Activated naive CD4-positive, alpha-beta T cell treated with anti-CD3 and anti-CD28 coated beads, Interleukin-2, amount 10 ng/mL, durations not matched to agents 7 days and 5 days (primary cell): ENCODE measurements at regions of chr14 and their contacts with region 1.

Region 1: DNA sequence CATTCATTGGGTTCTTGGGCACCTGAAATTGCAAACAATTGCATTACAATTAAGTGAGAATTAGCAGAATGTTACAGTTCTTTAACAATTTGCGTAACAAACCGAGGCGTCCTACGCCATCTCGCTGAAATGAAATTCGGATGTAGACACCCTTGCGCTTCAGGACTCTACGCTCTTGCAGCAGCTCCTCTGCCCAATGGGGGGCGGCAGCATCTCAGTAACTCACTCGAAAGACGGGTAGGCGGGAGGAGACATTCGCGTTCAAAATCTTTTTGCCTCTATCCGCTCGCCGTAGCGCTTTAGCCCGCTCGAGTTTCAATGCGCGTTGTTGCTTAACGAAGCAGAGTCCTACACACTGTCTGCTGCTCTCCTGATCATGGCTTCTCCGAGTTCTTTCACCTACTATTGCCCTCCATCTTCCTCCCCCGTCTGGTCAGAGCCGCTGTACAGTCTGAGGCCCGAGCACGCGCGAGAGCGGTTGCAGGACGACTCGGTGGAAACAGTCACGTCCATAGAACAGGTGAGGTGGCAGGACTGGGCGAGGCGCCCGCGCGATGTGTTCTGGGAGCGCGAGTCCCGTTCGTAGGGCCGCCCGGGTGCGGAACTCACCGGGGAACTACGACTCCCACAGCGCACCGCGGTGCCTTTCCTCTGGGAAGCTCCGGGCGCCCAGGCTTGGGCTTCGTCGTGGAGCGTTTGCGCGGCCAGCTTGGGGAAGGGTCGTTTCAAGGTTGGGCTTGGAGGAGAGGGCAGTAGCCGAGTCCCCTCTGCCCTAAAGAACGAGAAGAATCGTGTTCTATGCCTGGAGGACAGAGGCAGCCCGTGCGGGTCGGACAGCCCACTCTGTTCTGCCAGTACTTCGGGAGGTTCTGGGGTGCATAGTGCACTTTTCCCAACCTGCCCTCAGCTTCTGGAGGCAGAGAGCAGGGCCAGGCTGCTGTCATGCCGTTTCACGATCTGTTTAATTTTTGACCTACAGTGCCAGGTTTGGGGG is at the start of gene FNTB:
- DNase-seq: peak; percentile 95
- H3K4me3 Mint-ChIP-seq: peak within 1 kb of the TSS; percentile 85
- H3K27ac Mint-ChIP-seq: peak within 1 kb of the TSS; percentile 93
- H3K4me1 Mint-ChIP-seq: peaks cover 52% of the 10 kb centered on the region
- H3K27me3 Mint-ChIP-seq: peaks cover 21% of the 10 kb centered on the region

Region 2: DNA sequence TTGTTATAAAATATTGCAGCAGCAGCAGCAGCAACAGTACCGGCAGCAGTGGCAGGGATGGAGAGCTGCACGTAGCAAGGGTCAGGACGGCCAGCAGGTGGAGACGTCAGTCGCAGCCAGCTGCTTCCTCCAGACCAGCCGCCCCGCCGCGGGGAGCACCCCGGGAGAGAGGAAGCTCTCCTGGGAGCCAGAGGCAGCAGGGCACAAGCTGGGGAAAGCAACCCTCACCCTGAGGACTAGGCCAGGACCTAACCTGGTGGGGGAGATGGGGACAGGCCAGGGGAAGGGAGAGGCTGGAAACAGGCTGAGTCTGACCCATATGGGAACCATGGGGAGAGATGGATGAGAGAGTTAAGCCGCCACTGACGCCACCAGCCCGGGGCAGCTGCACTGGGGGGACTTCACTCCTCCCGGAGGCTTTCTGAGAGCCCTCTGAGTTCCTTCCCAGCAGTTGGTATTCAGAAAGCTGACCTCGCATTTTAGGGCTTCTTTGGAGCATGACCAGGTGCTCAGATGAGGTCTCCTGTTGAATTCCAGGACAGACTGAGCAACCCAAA is 163.5 kb before region 1 on chr14:
- CTCF ChIA-PET with region 1: interaction called, 28 read pairs
- DNase-seq: peak; percentile 81
- H3K4me3 Mint-ChIP-seq: no peak overlapping the region
- H3K27ac Mint-ChIP-seq: no peak overlapping the region
- H3K4me1 Mint-ChIP-seq: peaks cover 4% of the 10 kb centered on the region
- H3K27me3 Mint-ChIP-seq: peaks cover 80% of the 10 kb centered on the region

Region 3: DNA sequence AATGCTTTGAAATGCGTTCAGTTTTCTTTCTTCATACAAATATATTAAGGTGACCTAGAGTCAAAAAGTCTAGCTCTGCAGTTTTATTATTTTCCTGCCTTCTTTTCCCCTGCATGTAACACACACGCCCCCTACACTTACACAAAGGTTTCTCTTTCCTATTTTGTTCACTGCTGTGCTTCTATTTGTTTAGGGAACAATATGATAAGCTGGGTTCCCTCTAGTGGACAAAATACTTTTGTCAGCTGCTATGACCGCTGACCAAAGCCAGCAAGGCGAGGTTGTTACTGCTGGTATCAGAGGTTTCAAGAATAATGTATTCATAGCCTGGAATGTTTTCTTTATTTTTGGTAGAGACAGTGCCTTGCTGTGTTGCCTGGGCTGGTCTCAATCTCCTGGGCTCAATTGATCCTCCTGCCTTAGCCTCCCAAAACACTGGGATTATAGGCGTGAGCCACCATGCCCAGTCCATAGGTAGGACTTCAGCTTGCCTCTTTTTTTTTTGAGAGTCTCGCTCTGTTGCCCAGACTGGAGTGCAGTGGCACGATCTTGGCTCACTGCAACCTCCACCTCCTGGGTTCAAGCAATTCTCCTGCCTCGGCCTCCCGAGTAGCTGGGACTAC is 33.2 kb after region 1 on chr14:
- CTCF ChIA-PET with region 1: interaction called, 29 read pairs
- DNase-seq: no peak
- H3K4me3 Mint-ChIP-seq: no peak overlapping the region
- H3K27ac Mint-ChIP-seq: no peak overlapping the region
- H3K4me1 Mint-ChIP-seq: no peaks in the 10 kb centered on the region
- H3K27me3 Mint-ChIP-seq: no peaks in the 10 kb centered on the region

Region 4: GRCh38 chr14:65164068-65164824 is 177.4 kb after region 1 on chr14:
- CTCF ChIA-PET with region 1: interaction called, 16 read pairs
- DNase-seq: peak; percentile 56
- H3K4me3 Mint-ChIP-seq: no peak overlapping the region
- H3K27ac Mint-ChIP-seq: no peak overlapping the region
- H3K4me1 Mint-ChIP-seq: peaks cover 15% of the 10 kb centered on the region
- H3K27me3 Mint-ChIP-seq: peaks cover 6% of the 10 kb centered on the region